Heart right ventricle (tissue), 16 donors: ENCODE measurements at regions of chrX and their contacts with region 1.

Region 1: DNA sequence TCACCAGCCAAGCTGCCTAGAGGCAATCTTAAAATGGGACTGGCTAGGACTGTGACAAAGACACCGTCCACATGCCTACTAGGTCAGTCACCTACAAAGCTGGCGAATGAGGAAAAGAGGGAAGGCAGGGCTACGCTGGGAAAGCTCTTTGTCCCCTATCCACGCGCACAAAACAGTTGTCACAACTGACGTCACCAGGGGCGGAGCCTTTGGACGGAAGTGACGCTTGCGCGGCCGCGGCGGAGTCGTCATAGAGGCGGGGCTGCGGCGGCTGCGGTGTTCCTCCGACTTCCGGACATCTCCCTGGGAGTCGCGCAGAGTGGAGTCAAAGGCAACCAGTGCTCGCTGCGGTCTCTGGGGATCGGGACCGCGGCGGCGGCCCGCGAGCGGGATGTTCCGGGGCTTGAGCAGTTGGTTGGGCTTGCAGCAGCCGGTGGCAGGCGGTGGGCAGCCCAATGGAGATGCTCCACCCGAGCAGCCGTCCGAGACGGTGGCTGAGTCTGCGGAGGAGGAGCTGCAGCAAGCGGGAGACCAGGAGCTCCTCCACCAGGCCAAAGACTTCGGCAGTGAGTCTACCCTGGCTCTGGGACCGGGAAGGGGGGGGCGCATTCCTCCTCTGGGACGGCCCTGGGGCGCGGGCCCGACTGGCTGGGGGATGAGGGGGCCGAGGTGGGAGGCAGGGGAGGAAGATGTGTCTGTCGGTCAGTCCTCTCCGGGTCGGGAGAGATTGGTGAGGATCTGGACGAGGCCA is at the start of gene SYAP1:
- DNase-seq: peak; percentile 92 to 93
- ATAC-seq: peak; percentile 98 to 99 (median 99)
- H3K4me3 ChIP-seq: peak within 1 kb of the TSS; percentile 38 to 84 (median 73)
- H3K27ac ChIP-seq: peak within 1 kb of the TSS; percentile 66 to 97 (median 94)
- H3K4me1 ChIP-seq: peaks cover 0 to 32% (median 5%) of the 10 kb centered on the region in 9 donors
- H3K27me3 ChIP-seq: peaks cover 0 to 12% (median 0%) of the 10 kb centered on the region in 7 donors
- CTCF ChIP-seq: no peak
- total RNA-seq, gene SYAP1: 14.6 to 25.4 (median 17.5) TPM

Region 2: GRCh38 chrX:16786139-16786790 is 66.8 kb after region 1 on chrX and contains the start of gene TXLNG:
- intact Hi-C with region 1: loop called in 3 of 10 experiments (anchors 5 kb)
- DNase-seq: peak; percentile 93 to 96
- ATAC-seq: peak; percentile 99 to 100 (median 100)
- H3K4me3 ChIP-seq: peak within 1 kb of the TSS; percentile 55 to 89 (median 70)
- H3K27ac ChIP-seq: peak within 1 kb of the TSS; percentile 22 to 93 (median 82)
- H3K4me1 ChIP-seq: peaks cover 0 to 27% (median 9%) of the 10 kb centered on the region in 9 donors
- H3K27me3 ChIP-seq: peaks cover 0 to 9% (median 0%) of the 10 kb centered on the region in 7 donors
- CTCF ChIP-seq: no peak
- total RNA-seq, gene TXLNG: 4.8 to 6.8 (median 5.9) TPM

Region 3: GRCh38 chrX:16869393-16870094 is 150.0 kb after region 1 on chrX:
- intact Hi-C with region 1: loop called in 1 of 10 experiments (anchors 10 kb)
- DNase-seq: peak; percentile 9 to 44
- ATAC-seq: peak; percentile 5 to 41 (median 24)
- H3K4me3 ChIP-seq: peak overlapping the region; percentile 50 to 70 (median 64)
- H3K27ac ChIP-seq: peak overlapping the region; percentile 61 to 95 (median 86)
- H3K4me1 ChIP-seq: peaks cover 0 to 44% (median 23%) of the 10 kb centered on the region in 9 donors
- H3K27me3 ChIP-seq: peaks cover 0 to 88% (median 0%) of the 10 kb centered on the region in 7 donors
- CTCF ChIP-seq: no peak